ENCODE measurements at regions of chr17 and their contacts with region 1.

Region 1: DNA sequence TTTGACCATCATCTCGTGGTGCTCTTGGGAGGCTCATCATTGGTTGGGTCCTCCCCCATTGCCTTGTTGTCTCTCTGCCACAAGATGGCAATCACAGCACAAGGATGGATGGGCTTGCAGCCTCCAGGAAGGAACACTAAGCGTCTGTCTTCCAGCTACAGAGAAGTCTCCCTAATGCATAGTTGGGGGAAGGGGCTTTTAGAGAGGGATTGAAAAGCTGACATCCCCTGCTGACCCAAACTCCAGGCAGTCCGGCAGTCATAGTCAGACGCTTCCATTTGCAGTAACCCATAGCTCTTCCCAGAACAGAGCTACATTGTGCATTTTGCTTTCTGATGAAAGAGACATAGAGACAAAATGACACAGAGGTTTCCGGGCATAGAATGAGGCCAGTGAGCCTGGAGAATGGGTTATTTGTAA is 111.4 kb downstream of the UTP18 start:
- DNase-seq: peak; percentile 60 to 67
- H3K4me3 ChIP-seq: no peak overlapping the region
- H3K4me3 Mint-ChIP-seq: peak overlapping the region; percentile 67
- H3K27ac Mint-ChIP-seq: peak overlapping the region; percentile 76
- H3K4me1 ChIP-seq: no peaks in the 10 kb centered on the region
- H3K4me1 Mint-ChIP-seq: no peaks in the 10 kb centered on the region
- H3K27me3 ChIP-seq: peaks cover 2% of the 10 kb centered on the region; the same call in 1 of the 2 replicates
- H3K27me3 Mint-ChIP-seq: peaks cover 8% of the 10 kb centered on the region
- CTCF ChIP-seq: peak; percentile 74

Region 2: GRCh38 chr17:51298508-51299371 is 73.0 kb before region 1 on chr17:
- CTCF ChIA-PET with region 1: no interaction called
- POLR2A ChIA-PET with region 1: no interaction called
- intact Hi-C with region 1: loop called (anchors 2 kb)
- DNase-seq: peak in 1 of 2 experiments; percentile 48
- H3K4me3 ChIP-seq: no peak overlapping the region
- H3K4me3 Mint-ChIP-seq: no peak overlapping the region
- H3K27ac Mint-ChIP-seq: no peak overlapping the region
- H3K4me1 ChIP-seq: no peaks in the 10 kb centered on the region
- H3K4me1 Mint-ChIP-seq: no peaks in the 10 kb centered on the region
- H3K27me3 ChIP-seq: no peaks in the 10 kb centered on the region
- H3K27me3 Mint-ChIP-seq: no peaks in the 10 kb centered on the region
- CTCF ChIP-seq: peak; percentile 75 to 78

Region 3: DNA sequence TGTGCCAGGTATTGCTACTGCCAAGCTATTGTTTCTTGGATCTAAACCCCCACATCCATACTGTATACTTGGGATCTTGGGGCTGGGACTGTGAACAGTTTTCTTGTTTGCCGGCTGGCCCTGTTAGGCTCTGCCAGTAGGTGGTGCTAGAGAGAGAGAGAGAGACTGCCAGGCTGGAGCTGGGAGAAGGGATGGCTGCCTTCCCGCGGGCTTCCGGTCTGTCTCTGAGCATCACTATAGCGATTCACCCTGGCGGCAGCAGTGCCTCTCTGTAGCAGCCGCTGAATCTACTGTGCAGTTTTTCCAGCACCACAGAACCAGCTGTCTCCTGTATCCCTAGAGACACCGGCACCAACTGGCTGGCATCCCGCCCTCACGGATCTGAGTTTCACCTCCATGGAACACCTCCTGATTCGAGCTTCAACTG is 89.8 kb after region 1 on chr17:
- CTCF ChIA-PET with region 1: interaction called, 4 read pairs
- POLR2A ChIA-PET with region 1: no interaction called
- intact Hi-C with region 1: loop called (anchors 2 kb)
- DNase-seq: peak; percentile 74 to 79
- H3K4me3 ChIP-seq: no peak overlapping the region
- H3K4me3 Mint-ChIP-seq: no peak overlapping the region
- H3K27ac Mint-ChIP-seq: no peak overlapping the region
- H3K4me1 ChIP-seq: no peaks in the 10 kb centered on the region
- H3K4me1 Mint-ChIP-seq: no peaks in the 10 kb centered on the region
- H3K27me3 ChIP-seq: no peaks in the 10 kb centered on the region; the same call in 1 of the 2 replicates
- H3K27me3 Mint-ChIP-seq: peaks cover 18% of the 10 kb centered on the region
- CTCF ChIP-seq: peak; percentile 80 to 89

Region 4: GRCh38 chr17:51540151-51540550 is 168.4 kb after region 1 on chr17:
- CTCF ChIA-PET with region 1: interaction called, 12 read pairs
- POLR2A ChIA-PET with region 1: no interaction called
- intact Hi-C with region 1: loop called (anchors 1 kb)
- DNase-seq: peak in 1 of 2 experiments; percentile 16
- H3K4me3 ChIP-seq: no peak overlapping the region
- H3K4me3 Mint-ChIP-seq: no peak overlapping the region
- H3K27ac Mint-ChIP-seq: no peak overlapping the region
- H3K4me1 ChIP-seq: no peaks in the 10 kb centered on the region
- H3K4me1 Mint-ChIP-seq: no peaks in the 10 kb centered on the region
- H3K27me3 ChIP-seq: no peaks in the 10 kb centered on the region
- H3K27me3 Mint-ChIP-seq: peaks cover 6% of the 10 kb centered on the region
- CTCF ChIP-seq: peak; percentile 16 to 28

Region 5: DNA sequence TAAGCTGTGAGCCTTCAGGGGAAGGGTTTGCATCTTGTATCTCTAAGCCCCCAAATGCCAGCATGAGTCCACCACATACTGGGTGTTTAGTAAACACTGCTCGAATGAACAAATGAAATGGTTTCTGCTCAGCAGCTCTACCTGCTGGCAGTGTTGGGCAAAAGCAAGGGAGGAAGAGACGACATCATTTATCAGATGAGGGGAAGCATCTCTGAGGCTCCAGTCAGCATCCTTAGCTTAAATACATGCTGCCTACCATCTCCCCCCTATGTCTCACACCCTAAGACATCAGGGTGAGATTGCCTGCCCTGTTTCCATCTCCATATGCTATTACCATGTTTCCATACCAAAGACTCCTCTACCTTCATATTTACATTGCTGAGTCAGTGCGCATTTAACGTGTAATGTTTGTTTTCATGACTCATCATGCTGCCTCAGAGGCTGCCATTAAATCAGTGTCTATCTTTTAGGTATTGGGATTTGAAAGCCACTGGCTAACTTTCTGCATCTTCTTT is 268.4 kb after region 1 on chr17:
- CTCF ChIA-PET with region 1: no interaction called
- POLR2A ChIA-PET with region 1: no interaction called
- intact Hi-C with region 1: loop called (anchors 5 kb)
- DNase-seq: peak in 1 of 2 experiments; percentile 27
- H3K4me3 ChIP-seq: no peak overlapping the region
- H3K4me3 Mint-ChIP-seq: no peak overlapping the region
- H3K27ac Mint-ChIP-seq: no peak overlapping the region
- H3K4me1 ChIP-seq: 0 out of 2 replicates have a peak, but pooled peaks cover 6% of the 10 kb centered on the region
- H3K4me1 Mint-ChIP-seq: no peaks in the 10 kb centered on the region
- H3K27me3 ChIP-seq: no peaks in the 10 kb centered on the region
- H3K27me3 Mint-ChIP-seq: peaks cover 14% of the 10 kb centered on the region
- CTCF ChIP-seq: peak; percentile 52

Region 6: DNA sequence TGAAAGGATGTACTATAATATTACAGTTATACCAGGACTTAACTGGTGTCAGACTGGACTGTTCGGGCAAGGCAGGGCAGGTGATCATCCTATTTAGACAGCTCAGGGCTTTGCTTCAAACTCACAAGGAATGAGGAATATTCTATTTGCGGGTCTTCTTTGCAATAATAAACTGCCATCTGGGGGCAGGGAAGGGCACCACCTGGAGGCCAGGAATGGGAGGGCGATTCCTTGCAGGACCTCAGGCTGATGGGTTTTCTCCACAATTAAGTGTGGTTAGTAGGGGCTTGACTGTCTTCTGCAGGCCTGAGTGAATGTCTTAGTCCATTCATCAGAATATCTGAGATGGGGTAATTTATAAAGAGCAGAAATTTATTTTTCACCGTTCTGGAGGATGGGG is 362.7 kb after region 1 on chr17:
- CTCF ChIA-PET with region 1: interaction called, 3 read pairs
- POLR2A ChIA-PET with region 1: no interaction called
- intact Hi-C with region 1: loop called (anchors 1 kb)
- DNase-seq: peak in 1 of 2 experiments; percentile 42
- H3K4me3 ChIP-seq: no peak overlapping the region
- H3K4me3 Mint-ChIP-seq: no peak overlapping the region
- H3K27ac Mint-ChIP-seq: no peak overlapping the region
- H3K4me1 ChIP-seq: no peaks in the 10 kb centered on the region
- H3K4me1 Mint-ChIP-seq: peaks cover 6% of the 10 kb centered on the region
- H3K27me3 ChIP-seq: no peaks in the 10 kb centered on the region; the same call in 1 of the 2 replicates
- H3K27me3 Mint-ChIP-seq: peaks cover 15% of the 10 kb centered on the region
- CTCF ChIP-seq: peak; percentile 60 to 65

Region 7: DNA sequence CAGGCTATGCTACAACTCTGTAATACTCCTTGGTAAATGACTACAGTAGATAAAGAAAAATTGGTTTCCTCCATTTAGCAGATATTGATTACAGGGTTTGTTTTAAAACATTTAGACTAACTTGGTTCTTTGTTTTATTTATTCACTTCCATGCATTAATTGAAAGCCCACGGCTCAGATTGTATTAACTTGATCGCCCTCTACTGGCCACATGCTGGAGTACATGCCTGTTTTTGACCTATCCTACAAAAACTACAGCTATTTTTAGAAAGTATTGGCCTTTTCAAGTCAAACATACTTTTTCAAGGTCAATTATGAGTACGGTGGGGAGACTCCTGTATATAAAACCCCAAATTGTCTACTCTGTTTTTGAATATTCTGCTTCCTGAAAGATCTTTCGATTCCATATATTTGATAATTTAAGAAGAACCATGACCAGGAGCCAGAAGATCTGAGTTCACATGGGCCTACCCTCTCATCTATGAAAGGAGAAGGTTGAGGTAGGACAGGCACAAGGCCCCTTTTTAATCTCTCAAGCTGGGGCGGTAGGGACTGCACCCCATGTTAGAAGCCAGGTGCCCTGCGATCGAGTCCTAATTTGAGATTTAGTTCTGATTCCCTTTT is 735.0 kb after region 1 on chr17:
- CTCF ChIA-PET with region 1: no interaction called
- POLR2A ChIA-PET with region 1: no interaction called
- intact Hi-C with region 1: loop called (anchors 2 kb)
- DNase-seq: peak in 1 of 2 experiments; percentile 54
- H3K4me3 ChIP-seq: no peak overlapping the region
- H3K4me3 Mint-ChIP-seq: no peak overlapping the region
- H3K27ac Mint-ChIP-seq: no peak overlapping the region
- H3K4me1 ChIP-seq: no peaks in the 10 kb centered on the region
- H3K4me1 Mint-ChIP-seq: no peaks in the 10 kb centered on the region
- H3K27me3 ChIP-seq: no peaks in the 10 kb centered on the region
- H3K27me3 Mint-ChIP-seq: peaks cover 3% of the 10 kb centered on the region
- CTCF ChIP-seq: peak; percentile 70 to 89

Measured in Caco-2 (cell line).